IMR-90 (cell line): ENCODE measurements at regions of chr5 and their contacts with region 1.

Region 1: DNA sequence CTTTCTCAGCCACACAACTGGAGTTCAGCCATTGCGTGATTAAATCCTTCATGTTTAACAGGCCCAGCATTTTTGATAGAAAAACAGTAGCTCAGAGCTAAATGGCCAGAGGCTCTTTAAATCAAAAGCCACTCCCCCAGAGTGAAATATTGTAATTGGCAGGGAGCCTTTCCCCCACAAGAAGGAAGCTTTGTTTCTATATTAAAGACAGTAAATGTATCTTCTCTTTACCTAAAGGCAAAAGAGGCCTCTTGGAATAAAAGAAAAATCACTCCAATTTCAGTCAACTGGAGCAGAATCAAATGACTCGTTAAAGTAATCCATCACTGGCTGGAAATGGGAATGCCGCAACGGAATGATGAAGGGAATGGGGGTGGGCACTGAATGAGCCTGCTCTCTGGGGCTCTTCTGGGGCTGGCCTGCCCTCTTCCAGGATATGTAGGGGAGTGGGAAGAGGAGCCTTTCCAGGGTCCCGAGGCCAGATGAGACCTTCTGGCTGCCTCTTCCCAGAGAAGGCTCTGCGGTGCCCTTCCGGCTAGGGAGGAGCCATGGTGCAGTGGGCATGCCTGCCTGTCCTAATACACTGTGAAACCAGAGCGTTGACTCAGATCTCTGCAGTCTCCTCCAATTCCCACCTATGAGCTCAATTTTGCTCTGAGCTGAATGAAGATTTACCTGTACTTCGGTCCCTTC is 45.2 kb downstream of the ANKDD1B start:
- DNase-seq: peak; percentile 46
- ATAC-seq: peak; percentile 97
- H3K4me3 ChIP-seq: peak overlapping the region; percentile 56
- H3K27ac ChIP-seq: peak overlapping the region; percentile 72
- H3K4me1 ChIP-seq: no peaks in the 10 kb centered on the region; the same call in 1 of the 2 replicates
- H3K27me3 ChIP-seq: no peaks in the 10 kb centered on the region
- CTCF ChIP-seq: no peak
- POLR2A ChIP-seq: no peak
- RAD21 ChIP-seq: no peak

Region 2: DNA sequence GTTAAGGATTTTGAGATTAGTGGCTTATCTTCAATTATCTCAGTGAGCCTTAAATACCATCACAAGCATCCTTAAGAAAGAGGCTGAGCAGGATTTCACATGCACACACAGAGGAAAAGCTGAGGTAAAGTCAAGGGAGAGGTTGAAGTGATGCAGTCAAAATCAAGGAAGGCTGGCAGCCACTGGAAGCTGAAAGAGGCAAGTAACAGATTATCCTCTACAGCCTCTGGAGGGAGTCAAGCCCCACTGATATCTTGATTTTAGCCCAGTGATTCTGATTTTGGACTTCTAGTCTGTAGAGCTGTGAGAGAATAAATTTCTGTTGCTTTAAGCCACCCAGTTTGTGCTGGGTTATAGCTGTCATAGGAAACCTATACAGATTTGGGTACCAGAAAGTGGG is 499.9 kb before region 1 on chr5:
- CTCF ChIA-PET with region 1: no interaction called
- POLR2A ChIA-PET with region 1: no interaction called
- dilution Hi-C with region 1: no loop called
- in situ Hi-C with region 1: no loop called
- intact Hi-C with region 1: no loop called
- DNase-seq: no peak
- ATAC-seq: no peak
- H3K4me3 ChIP-seq: no peak overlapping the region
- H3K27ac ChIP-seq: no peak overlapping the region
- H3K4me1 ChIP-seq: no peaks in the 10 kb centered on the region
- H3K27me3 ChIP-seq: no peaks in the 10 kb centered on the region
- CTCF ChIP-seq: no peak
- POLR2A ChIP-seq: no peak
- RAD21 ChIP-seq: no peak

Region 3: GRCh38 chr5:75616971-75617621 is 39.4 kb before region 1 on chr5:
- CTCF ChIA-PET with region 1: no interaction called
- POLR2A ChIA-PET with region 1: no interaction called
- dilution Hi-C with region 1: no loop called
- in situ Hi-C with region 1: no loop called
- intact Hi-C with region 1: loop called (anchors 5 kb)
- DNase-seq: no peak
- ATAC-seq: no peak
- H3K4me3 ChIP-seq: no peak overlapping the region
- H3K27ac ChIP-seq: no peak overlapping the region
- H3K4me1 ChIP-seq: no peaks in the 10 kb centered on the region
- H3K27me3 ChIP-seq: no peaks in the 10 kb centered on the region
- CTCF ChIP-seq: no peak
- POLR2A ChIP-seq: no peak
- RAD21 ChIP-seq: no peak

Region 4: GRCh38 chr5:75670577-75670976 is 14.1 kb after region 1 on chr5:
- CTCF ChIA-PET with region 1: interaction called, 5 read pairs
- POLR2A ChIA-PET with region 1: no interaction called
- dilution Hi-C with region 1: no loop called
- in situ Hi-C with region 1: no loop called
- intact Hi-C with region 1: loop called (anchors 2 kb)
- DNase-seq: peak; percentile 28
- ATAC-seq: peak; percentile 34
- H3K4me3 ChIP-seq: no peak overlapping the region
- H3K27ac ChIP-seq: no peak overlapping the region
- H3K4me1 ChIP-seq: no peaks in the 10 kb centered on the region
- H3K27me3 ChIP-seq: no peaks in the 10 kb centered on the region
- CTCF ChIP-seq: no peak
- POLR2A ChIP-seq: no peak
- RAD21 ChIP-seq: no peak

Region 5: DNA sequence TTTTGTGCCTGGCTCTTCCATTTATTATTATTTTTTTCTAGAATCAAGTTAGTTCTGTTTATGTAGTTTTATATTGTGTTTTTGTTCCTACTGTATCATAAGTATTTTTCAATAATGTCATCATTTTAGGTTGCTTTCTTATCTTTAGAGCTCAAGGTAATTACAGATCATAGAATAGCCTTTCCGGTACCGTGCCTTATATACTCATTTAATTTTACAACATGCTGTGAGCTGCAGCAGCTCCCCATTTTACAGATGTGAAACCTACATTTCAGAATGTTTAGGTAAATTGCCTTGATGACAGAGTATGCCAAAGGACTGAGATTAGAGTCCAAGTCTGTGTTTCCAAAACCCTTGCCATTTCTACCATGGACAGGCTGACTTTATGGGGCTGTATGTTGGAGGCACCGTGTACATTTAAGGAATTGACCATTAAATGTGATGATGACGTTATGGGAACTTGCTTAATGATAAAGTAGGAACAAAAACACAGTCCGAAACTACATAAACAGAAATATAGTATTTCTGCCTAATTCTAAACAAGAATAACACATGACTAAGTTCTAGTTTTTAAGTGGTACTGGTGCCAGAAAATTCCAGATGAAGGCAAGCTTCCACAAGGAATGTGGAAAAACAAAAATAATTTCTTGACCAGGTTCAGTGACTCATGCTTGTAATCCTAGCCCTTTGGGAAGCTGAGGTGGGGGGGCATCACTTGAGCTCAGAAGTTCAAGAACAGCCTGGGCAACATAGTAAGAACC is 844.4 kb after region 1 on chr5:
- CTCF ChIA-PET with region 1: no interaction called
- POLR2A ChIA-PET with region 1: no interaction called
- dilution Hi-C with region 1: no loop called
- in situ Hi-C with region 1: no loop called
- intact Hi-C with region 1: no loop called
- DNase-seq: peak; percentile 43
- ATAC-seq: peak; percentile 56
- H3K4me3 ChIP-seq: no peak overlapping the region
- H3K27ac ChIP-seq: no peak overlapping the region
- H3K4me1 ChIP-seq: no peaks in the 10 kb centered on the region
- H3K27me3 ChIP-seq: peaks cover 3% of the 10 kb centered on the region
- CTCF ChIP-seq: no peak
- POLR2A ChIP-seq: no peak
- RAD21 ChIP-seq: no peak